Adrenal gland (tissue), 19 donors: ENCODE measurements at regions of chr3 and their contacts with region 1.

Region 1: DNA sequence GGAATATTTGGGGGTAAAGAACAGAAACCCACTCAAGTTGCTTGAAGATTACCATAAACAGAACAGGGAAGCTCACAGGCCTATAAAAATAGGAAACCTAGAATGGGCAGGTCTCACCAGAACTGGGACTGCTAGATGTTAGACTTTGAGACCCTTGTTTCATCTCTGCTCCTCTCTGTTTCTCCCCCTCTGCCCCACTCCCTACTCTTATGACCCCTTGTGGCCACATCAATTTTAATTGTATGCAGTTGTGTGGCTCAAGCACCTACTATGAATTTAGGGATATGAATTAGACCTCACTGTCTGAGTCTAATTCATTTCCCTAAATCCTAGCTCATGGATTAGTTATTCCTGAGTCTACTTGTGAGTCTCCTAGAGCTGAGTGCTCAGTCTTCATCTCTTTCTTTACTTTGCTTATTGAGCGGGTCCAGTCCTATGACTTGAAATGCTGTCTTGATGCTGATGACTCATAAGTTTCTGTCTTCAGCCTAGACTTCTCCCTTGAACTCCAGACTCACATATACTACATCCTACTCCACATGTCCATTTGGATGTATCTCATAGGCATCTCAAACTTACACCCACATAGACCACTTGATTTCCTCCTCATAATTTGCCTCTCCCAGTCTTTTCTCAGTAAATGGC is 78.7 kb downstream of the ITPR1 start:
- DNase-seq: no peak
- H3K4me3 ChIP-seq: no peak overlapping the region
- H3K27ac ChIP-seq: peak overlapping the region in 1 of 5 donors; percentile 24
- H3K4me1 ChIP-seq: peaks cover 12 to 31% of the 10 kb centered on the region in 2 donors
- H3K27me3 ChIP-seq: no peaks in the 10 kb centered on the region
- CTCF ChIP-seq: no peak
- POLR2A ChIP-seq: no peak

Region 2: GRCh38 chr3:4493014-4493940 is 78.5 kb before region 1 on chr3 and contains the start of gene ITPR1:
- intact Hi-C with region 1: loop called in 1 of 2 experiments (anchors 10 kb)
- DNase-seq: peak; percentile 98 to 100 (median 99)
- H3K4me3 ChIP-seq: peak within 1 kb of the TSS; percentile 56 to 81 (median 73)
- H3K27ac ChIP-seq: peak within 1 kb of the TSS; percentile 64 to 90 (median 83)
- H3K4me1 ChIP-seq: peaks cover 8 to 48% of the 10 kb centered on the region in 2 donors
- H3K27me3 ChIP-seq: no peaks in the 10 kb centered on the region
- CTCF ChIP-seq: no peak
- POLR2A ChIP-seq: peak; percentile 99 to 100
- total RNA-seq, gene ITPR1: 55.8 to 198 (median 82.2) TPM

Region 3: DNA sequence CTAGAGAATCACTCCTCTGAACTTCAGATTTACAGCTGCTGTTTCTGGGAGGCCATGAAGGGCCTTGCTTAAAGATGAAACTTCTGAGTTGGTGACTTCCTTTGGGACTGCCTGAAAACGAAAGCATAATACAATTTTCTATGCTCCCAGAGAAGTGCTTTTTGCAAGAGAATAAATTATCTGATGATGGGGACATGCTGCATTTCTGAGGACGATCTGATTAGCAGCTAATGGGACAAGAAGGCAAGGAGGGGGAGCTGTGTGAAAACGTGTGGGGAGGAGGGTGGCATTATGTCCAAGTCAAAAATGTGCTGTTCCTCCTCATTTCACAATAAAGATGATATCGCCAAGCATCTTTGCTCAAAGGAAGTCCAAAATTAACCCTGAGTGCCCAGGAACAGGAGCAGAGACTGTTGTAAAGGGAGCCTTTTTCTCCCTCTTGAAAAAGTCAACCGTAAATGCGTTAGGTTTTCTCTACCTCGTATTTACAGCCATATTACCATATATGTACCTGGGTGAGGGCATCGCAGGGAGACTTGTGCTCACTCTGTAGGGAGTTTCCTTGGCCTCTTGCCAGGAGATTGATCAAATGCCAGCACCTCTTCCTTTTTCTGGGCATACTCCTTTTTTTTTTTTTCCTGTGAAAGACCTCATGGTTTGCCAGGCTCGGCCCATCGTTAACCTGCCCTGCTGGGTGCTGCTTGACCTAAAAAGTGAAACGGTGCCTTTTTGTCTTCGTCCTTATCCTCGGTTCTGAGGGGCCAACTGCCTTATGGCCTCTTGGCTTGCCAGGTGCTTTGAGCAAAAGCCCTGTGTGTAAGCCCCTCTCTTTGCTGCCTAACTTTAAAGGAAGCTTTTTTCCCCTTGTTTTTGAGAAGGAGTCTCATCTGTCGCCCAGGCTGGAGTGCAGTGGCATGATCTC is 67.2 kb before region 1 on chr3:
- intact Hi-C with region 1: loop called (anchors 10 kb)
- DNase-seq: peak; percentile 50 to 76 (median 58)
- H3K4me3 ChIP-seq: peak overlapping the region in 1 of 4 donors; percentile 45
- H3K27ac ChIP-seq: peak overlapping the region in 4 of 5 donors; percentile 38 to 87 (median 68)
- H3K4me1 ChIP-seq: peaks cover 20 to 43% of the 10 kb centered on the region in 2 donors
- H3K27me3 ChIP-seq: no peaks in the 10 kb centered on the region
- CTCF ChIP-seq: no peak
- POLR2A ChIP-seq: no peak

Region 4: GRCh38 chr3:4629095-4630007 is 57.5 kb after region 1 on chr3:
- intact Hi-C with region 1: no loop called
- DNase-seq: no peak
- H3K4me3 ChIP-seq: no peak overlapping the region
- H3K27ac ChIP-seq: no peak overlapping the region
- H3K4me1 ChIP-seq: no peaks in the 10 kb centered on the region
- H3K27me3 ChIP-seq: no peaks in the 10 kb centered on the region
- CTCF ChIP-seq: no peak
- POLR2A ChIP-seq: no peak